SK-N-SH (cell line): ENCODE measurements at regions of chr20 and their contacts with region 1.

Region 1: GRCh38 chr20:59403261-59403961 is 103.0 kb downstream of the EDN3 start:
- DNase-seq: peak; percentile 95
- H3K4me3 ChIP-seq: peak overlapping the region; percentile 21 to 58
- H3K27ac ChIP-seq: peak overlapping the region in 1 of 2 experiments; percentile 50; a peak in 1 of 4 replicates
- H3K4me1 ChIP-seq: peaks cover 0 to 29% of the 10 kb centered on the region in 2 experiments; a peak in 2 of 4 replicates
- H3K27me3 ChIP-seq: peaks cover 8% of the 10 kb centered on the region; the same call in 1 of the 2 replicates
- CTCF ChIP-seq: peak; percentile 97
- EP300 ChIP-seq: peak in 1 of 2 experiments; percentile 26; a peak in 1 of 4 replicates
- RAD21 ChIP-seq: peak; percentile 91

Region 2: GRCh38 chr20:58864350-58864749 is 539.1 kb before region 1 on chr20:
- CTCF ChIA-PET with region 1: interaction called, 40 read pairs
- POLR2A ChIA-PET with region 1: no interaction called
- DNase-seq: peak; percentile 49
- H3K4me3 ChIP-seq: no peak overlapping the region
- H3K27ac ChIP-seq: no peak overlapping the region
- H3K4me1 ChIP-seq: no peaks in the 10 kb centered on the region
- H3K27me3 ChIP-seq: no peaks in the 10 kb centered on the region
- CTCF ChIP-seq: peak; percentile 27
- EP300 ChIP-seq: no peak
- RAD21 ChIP-seq: peak; percentile 77

Region 3: GRCh38 chr20:58898629-58899408 is 504.6 kb before region 1 on chr20:
- CTCF ChIA-PET with region 1: interaction called, 10 read pairs
- POLR2A ChIA-PET with region 1: no interaction called
- DNase-seq: no peak
- H3K4me3 ChIP-seq: no peak overlapping the region
- H3K27ac ChIP-seq: peak overlapping the region in 1 of 2 experiments; percentile 30; a peak in 2 of 4 replicates
- H3K4me1 ChIP-seq: peaks cover 38 to 54% of the 10 kb centered on the region in 2 experiments; a peak in 3 of 4 replicates
- H3K27me3 ChIP-seq: no peaks in the 10 kb centered on the region
- CTCF ChIP-seq: no peak
- EP300 ChIP-seq: no peak
- RAD21 ChIP-seq: no peak

Region 4: DNA sequence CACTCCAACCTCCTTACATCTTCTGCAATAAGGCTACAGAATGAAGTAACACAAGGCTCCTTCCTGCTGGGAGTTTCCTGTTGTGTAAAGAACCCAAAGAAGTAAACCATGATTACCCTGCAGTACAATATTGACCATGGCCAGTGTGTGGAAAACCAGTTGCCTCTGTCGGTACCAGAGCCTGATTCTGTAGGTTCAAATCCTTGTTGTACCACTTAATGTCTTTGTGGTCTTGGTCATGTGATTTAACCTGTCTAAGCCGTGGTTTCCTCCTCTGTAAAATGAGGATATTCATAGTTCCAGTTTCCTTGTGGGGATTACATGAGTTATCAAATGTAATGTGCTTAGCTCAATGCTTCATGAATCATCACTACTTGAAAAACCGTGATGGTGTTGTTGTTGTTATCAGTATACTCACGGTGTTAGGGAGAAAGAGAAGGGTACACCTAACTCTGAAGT is 300.5 kb before region 1 on chr20:
- CTCF ChIA-PET with region 1: no interaction called
- POLR2A ChIA-PET with region 1: no interaction called
- DNase-seq: no peak
- H3K4me3 ChIP-seq: no peak overlapping the region
- H3K27ac ChIP-seq: no peak overlapping the region
- H3K4me1 ChIP-seq: no peaks in the 10 kb centered on the region; a peak in 1 of 4 replicates
- H3K27me3 ChIP-seq: no peaks in the 10 kb centered on the region
- CTCF ChIP-seq: no peak
- EP300 ChIP-seq: no peak
- RAD21 ChIP-seq: no peak

Region 5: DNA sequence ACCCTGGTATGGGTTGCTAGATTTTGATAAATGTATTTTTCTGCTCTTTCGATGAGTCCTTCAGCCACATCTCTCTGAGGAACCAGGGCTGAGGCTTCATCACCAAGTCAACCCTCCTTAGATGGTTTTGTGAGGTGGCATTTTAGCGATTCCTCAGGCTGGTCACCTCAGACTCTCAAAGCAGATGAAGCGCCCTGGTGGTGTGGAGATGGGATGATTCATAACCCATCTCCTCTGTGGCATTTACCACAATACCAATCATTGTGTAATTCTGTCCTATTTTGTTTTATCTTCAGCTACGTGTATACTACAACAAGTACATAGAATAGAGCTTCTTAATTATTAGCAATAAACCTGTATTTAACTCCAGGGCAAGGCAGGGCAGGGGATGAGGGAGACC is 160.7 kb before region 1 on chr20:
- CTCF ChIA-PET with region 1: interaction called, 11 read pairs
- POLR2A ChIA-PET with region 1: no interaction called
- DNase-seq: no peak
- H3K4me3 ChIP-seq: no peak overlapping the region
- H3K27ac ChIP-seq: no peak overlapping the region
- H3K4me1 ChIP-seq: peaks cover 0 to 4% of the 10 kb centered on the region in 2 experiments; a peak in 1 of 4 replicates
- H3K27me3 ChIP-seq: no peaks in the 10 kb centered on the region; the same call in 1 of the 2 replicates
- CTCF ChIP-seq: no peak
- EP300 ChIP-seq: no peak
- RAD21 ChIP-seq: no peak

Region 6: DNA sequence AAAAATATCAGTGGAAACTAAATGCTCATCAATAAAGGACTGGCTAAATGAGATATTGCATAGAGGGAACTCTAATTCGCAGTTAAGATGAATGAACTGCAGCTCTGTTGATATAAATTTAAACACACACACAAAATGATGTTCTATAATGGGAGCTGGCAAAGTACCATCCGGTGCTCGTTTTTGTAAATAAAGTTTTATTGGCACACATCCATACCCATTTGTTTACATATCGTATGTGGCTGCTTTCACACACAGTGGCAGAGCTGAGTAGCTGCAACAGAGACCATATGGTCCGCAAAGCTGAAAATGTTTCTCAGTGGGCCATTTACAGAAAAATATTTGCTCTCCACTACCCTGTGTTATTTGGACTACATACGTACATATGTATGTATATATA is 17.7 kb after region 1 on chr20:
- CTCF ChIA-PET with region 1: interaction called, 21 read pairs
- POLR2A ChIA-PET with region 1: interaction called, 3 read pairs
- DNase-seq: no peak
- H3K4me3 ChIP-seq: no peak overlapping the region
- H3K27ac ChIP-seq: no peak overlapping the region
- H3K4me1 ChIP-seq: peaks cover 0 to 21% of the 10 kb centered on the region in 2 experiments; a peak in 1 of 4 replicates
- H3K27me3 ChIP-seq: peaks cover 7% of the 10 kb centered on the region; the same call in 1 of the 2 replicates
- CTCF ChIP-seq: no peak
- EP300 ChIP-seq: no peak
- RAD21 ChIP-seq: no peak

Region 7: GRCh38 chr20:59495894-59496510 is 92.6 kb after region 1 on chr20:
- CTCF ChIA-PET with region 1: interaction called, 15 read pairs
- POLR2A ChIA-PET with region 1: no interaction called
- DNase-seq: peak; percentile 84
- H3K4me3 ChIP-seq: no peak overlapping the region; a peak in 1 of 4 replicates
- H3K27ac ChIP-seq: no peak overlapping the region; a peak in 1 of 4 replicates
- H3K4me1 ChIP-seq: peaks cover 0 to 7% of the 10 kb centered on the region in 2 experiments; a peak in 1 of 4 replicates
- H3K27me3 ChIP-seq: no peaks in the 10 kb centered on the region
- CTCF ChIP-seq: peak; percentile 90
- EP300 ChIP-seq: no peak
- RAD21 ChIP-seq: peak; percentile 88